A549 (cell line): ENCODE measurements at regions of chr19 and their contacts with region 1.

Region 1: DNA sequence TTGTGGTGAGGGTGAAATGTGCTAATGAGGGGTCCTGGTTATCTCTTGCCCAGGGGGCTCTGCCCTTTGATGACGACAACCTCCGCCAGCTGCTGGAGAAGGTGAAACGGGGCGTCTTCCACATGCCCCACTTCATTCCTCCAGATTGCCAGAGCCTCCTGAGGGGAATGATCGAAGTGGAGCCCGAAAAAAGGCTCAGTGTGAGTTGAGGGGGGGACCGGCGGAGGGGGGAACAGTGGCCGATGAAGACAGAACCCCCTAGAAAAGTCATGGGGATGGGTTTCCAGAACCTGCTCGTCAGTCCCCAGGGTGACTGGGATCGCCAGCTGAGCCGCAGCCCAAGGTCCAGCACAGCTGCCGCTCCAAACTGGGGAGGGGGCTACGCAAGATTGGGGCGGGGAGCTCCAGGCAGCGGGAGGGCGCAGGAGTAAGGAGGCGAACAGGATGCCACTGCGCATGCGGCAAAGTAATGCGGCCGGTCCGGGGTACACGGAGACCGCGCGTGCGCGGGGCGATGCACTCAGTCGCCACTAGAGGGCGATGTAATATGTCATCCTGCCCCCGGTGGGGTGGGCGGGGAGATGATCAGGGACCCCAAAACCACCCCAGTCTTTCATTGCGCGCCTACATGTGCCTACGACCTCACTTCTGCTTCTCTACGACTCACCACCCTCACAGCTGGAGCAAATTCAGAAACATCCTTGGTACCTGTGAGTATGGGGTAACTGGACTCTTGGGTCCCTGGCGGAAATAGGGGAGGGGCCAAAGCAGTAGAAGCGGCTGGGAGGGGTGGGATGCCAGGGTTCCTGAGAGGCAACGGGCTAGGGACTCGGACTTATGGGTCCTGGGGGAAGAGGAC is 17.9 kb downstream of the BRSK1 start:
- DNase-seq: peak; percentile 82 to 100
- ATAC-seq: peak; percentile 72 to 88
- H3K4me3 ChIP-seq: peak overlapping the region; percentile 54
- H3K27ac ChIP-seq: peak overlapping the region; percentile 87 to 88
- H3K4me1 ChIP-seq: peaks cover 6% of the 10 kb centered on the region; the same call in 2 of the 3 replicates
- CTCF ChIP-seq: peak; percentile 99
- EP300 ChIP-seq: no peak
- POLR2A ChIP-seq: peak; percentile 56
- RAD21 ChIP-seq: peak; percentile 83 to 92

Region 2: GRCh38 chr19:55088543-55089341 is 212.9 kb before region 1 on chr19:
- CTCF ChIA-PET with region 1: no interaction called
- POLR2A ChIA-PET with region 1: no interaction called
- DNase-seq: peak; percentile 71 to 81
- ATAC-seq: peak; percentile 52 to 79
- H3K4me3 ChIP-seq: no peak overlapping the region
- H3K27ac ChIP-seq: no peak overlapping the region
- H3K4me1 ChIP-seq: no peaks in the 10 kb centered on the region
- CTCF ChIP-seq: peak; percentile 93
- EP300 ChIP-seq: no peak
- POLR2A ChIP-seq: no peak
- RAD21 ChIP-seq: peak; percentile 33 to 51; a peak in 3 of 5 replicates

Region 3: DNA sequence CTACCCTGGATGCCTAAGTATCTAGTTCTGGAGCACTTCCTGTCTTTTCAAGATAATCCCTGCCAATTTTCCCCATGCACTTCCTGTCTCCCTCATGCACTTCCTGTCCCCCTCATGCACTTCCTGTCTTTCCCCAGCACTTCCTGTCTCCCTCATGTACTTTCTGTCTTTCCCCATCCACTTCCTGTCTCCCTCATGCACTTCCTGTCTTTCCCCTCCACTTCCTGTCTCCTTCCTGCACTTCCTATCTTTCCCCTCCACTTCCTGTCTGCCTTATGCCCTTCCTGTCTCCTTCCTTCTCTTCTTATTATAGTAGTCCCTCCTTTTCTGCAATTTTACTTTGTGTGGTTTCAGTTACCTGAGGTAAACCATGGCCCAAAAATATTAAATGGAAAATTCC is 149.7 kb before region 1 on chr19:
- CTCF ChIA-PET with region 1: no interaction called
- POLR2A ChIA-PET with region 1: no interaction called
- DNase-seq: peak in 1 of 2 experiments; percentile 55
- ATAC-seq: no peak
- H3K4me3 ChIP-seq: no peak overlapping the region
- H3K27ac ChIP-seq: peak overlapping the region in 1 of 2 experiments; percentile 56; a peak in 2 of 6 replicates
- H3K4me1 ChIP-seq: peaks cover 29% of the 10 kb centered on the region
- CTCF ChIP-seq: no peak
- EP300 ChIP-seq: no peak
- POLR2A ChIP-seq: no peak
- RAD21 ChIP-seq: no peak

Region 4: GRCh38 chr19:55258828-55259539 is 42.7 kb before region 1 on chr19 and contains the start of gene PPP6R1:
- CTCF ChIA-PET with region 1: interaction called, 12 read pairs
- POLR2A ChIA-PET with region 1: no interaction called
- DNase-seq: peak; percentile 99 to 100
- ATAC-seq: peak; percentile 83 to 93
- H3K4me3 ChIP-seq: peak within 1 kb of the TSS; percentile 81
- H3K27ac ChIP-seq: peak within 1 kb of the TSS; percentile 87 to 95
- H3K4me1 ChIP-seq: peaks cover 36% of the 10 kb centered on the region
- CTCF ChIP-seq: no peak
- EP300 ChIP-seq: peak in 1 of 2 experiments; percentile 31; a peak in 1 of 5 replicates
- POLR2A ChIP-seq: peak; percentile 87
- RAD21 ChIP-seq: peak; percentile 44 to 61; a peak in 4 of 5 replicates
- polyA plus RNA-seq, gene PPP6R1: 42.9 and 44.6 TPM in 2 replicates

Region 5: DNA sequence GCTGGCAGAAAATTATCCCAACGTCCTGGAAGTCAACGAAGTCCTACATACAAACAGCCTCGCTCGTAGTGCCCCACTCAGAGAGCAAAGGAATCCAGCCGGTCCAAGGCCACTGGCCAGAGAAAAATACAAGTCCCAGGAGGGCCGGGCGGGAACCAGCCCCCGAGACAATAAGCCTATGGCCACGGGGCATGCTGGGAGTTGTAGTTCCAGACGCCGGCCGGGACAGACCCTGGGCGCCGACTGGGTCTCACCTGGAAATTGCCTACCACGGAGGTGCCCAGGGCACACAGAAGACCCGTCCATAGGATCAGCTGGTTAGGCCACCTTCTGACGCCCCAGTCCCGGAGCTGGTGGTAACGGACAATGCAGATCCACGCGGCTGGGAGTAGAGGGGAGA is 18.1 kb after region 1 on chr19:
- CTCF ChIA-PET with region 1: interaction called, 306 read pairs
- POLR2A ChIA-PET with region 1: interaction called, 3 read pairs
- DNase-seq: no peak
- ATAC-seq: peak; percentile 54 to 82; a peak in 4 of 6 replicates
- H3K4me3 ChIP-seq: no peak overlapping the region
- H3K27ac ChIP-seq: 0 out of 6 replicates have a peak overlapping the region, but pooled peaks of 1 of the 2 experiments have one; percentile 14
- H3K4me1 ChIP-seq: peaks cover 19% of the 10 kb centered on the region
- CTCF ChIP-seq: no peak
- EP300 ChIP-seq: no peak
- POLR2A ChIP-seq: no peak
- RAD21 ChIP-seq: no peak

Region 6: GRCh38 chr19:55339048-55339888 is 37.6 kb after region 1 on chr19 and contains the start of gene KMT5C:
- CTCF ChIA-PET with region 1: interaction called, 84 read pairs
- POLR2A ChIA-PET with region 1: interaction called, 11 read pairs
- DNase-seq: peak; percentile 100
- ATAC-seq: peak; percentile 81 to 92
- H3K4me3 ChIP-seq: peak within 1 kb of the TSS; percentile 63
- H3K27ac ChIP-seq: peak within 1 kb of the TSS; percentile 90 to 93
- H3K4me1 ChIP-seq: peaks cover 17% of the 10 kb centered on the region
- CTCF ChIP-seq: no peak
- EP300 ChIP-seq: no peak
- POLR2A ChIP-seq: no peak
- RAD21 ChIP-seq: no peak; a peak in 1 of 5 replicates
- polyA plus RNA-seq, gene KMT5C: 6.6 and 9.5 TPM in 2 replicates

Region 7: DNA sequence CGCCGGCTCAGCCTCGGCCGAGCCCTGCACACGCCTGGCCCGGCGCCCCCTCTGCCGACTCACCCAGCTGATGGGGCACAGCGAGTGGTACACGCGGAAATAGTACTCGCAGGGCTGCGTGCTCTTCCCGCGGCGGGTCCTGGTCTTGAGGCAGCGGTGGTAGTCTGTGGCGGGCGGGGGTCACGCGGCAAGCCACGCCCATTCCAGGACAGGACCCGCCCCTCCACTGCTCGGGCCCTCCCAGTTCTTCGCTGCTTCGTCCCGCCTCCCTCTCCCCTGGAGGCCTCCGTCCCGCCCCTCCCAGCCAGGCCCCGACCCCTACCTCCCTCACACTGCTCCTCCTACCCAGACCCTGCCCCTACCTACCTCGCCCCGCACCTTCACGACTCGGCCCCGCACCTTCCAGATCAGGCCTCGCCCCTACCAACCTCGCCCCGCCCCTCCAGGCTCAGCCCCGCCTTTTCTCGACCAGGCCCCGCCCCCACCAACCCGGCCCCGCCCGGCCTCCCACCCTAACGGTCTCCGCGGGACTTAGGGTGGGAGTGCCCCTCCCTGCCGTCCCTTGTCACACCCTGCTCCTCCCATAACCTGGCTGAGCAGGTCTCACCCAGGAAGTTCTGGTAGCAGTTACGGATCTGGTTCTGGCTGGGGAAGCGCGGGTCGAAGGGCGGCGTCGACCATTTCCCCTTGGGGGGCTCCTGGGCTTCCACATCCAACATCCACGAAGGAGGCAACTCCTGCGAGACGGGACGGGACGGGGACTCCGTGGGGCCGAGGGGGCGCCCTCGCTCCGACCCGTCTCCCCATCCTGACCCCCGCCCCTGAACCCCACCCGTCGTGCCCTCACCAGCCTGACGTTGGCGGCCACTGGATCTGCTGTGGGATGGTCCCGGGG is 52.4 kb after region 1 on chr19:
- CTCF ChIA-PET with region 1: interaction called, 105 read pairs
- POLR2A ChIA-PET with region 1: no interaction called
- DNase-seq: peak; percentile 75 to 90
- ATAC-seq: peak; percentile 75 to 91
- H3K4me3 ChIP-seq: peak overlapping the region; percentile 50
- H3K27ac ChIP-seq: peak overlapping the region; percentile 62 to 84
- H3K4me1 ChIP-seq: peaks cover 12% of the 10 kb centered on the region
- CTCF ChIP-seq: no peak
- EP300 ChIP-seq: no peak
- POLR2A ChIP-seq: no peak
- RAD21 ChIP-seq: no peak

Region 8: DNA sequence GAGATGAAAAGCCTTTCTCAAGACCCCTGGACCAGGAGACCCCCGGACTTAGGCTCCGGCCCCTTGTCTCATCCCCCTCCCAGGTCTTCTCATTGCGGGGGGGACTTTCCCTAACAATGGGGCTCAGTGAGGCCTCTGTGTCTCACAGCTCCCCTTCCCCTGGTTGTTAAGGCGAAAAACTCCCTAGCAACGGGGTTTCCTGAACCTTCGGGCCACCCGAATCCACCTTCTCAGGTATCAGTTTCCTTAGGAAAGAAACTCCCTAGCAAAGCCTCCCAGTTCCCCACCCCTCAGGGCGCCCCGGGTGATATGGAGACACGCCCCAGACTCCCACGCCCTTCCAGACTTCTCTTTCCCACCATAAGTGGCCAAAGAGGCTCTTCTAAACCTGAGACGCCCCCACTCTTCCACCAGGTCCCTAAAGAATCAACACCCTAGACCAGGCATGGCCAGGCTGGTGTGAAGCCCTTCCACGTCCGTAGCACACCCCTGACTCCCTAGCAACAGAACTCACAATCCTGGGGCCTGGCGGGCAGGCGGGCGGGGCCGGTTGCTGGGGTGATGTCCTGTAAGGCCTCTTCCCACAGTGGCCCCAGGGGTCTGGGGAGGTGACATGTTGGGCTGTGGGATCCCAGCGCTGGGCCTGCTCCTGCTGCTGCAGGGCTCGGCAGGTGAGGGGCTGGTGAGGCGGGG is 74.7 kb after region 1 on chr19 and contains the start of gene TMEM190:
- CTCF ChIA-PET with region 1: interaction called, 20 read pairs
- POLR2A ChIA-PET with region 1: interaction called, 4 read pairs
- DNase-seq: peak in 1 of 2 experiments; percentile 68
- ATAC-seq: peak in 1 of 2 experiments; percentile 2; a peak in 2 of 6 replicates
- H3K4me3 ChIP-seq: no peak within 1 kb of the TSS
- H3K27ac ChIP-seq: peak within 1 kb of the TSS; percentile 91 to 96
- H3K4me1 ChIP-seq: peaks cover 86% of the 10 kb centered on the region
- CTCF ChIP-seq: no peak
- EP300 ChIP-seq: no peak
- POLR2A ChIP-seq: no peak
- RAD21 ChIP-seq: no peak
- polyA plus RNA-seq, gene TMEM190: 0.58 and 1.1 TPM in 2 replicates

Region 9: GRCh38 chr19:55398200-55398925 is 96.7 kb after region 1 on chr19:
- CTCF ChIA-PET with region 1: interaction called, 10 read pairs
- POLR2A ChIA-PET with region 1: no interaction called
- DNase-seq: no peak
- ATAC-seq: peak in 1 of 2 experiments; percentile 9; a peak in 3 of 6 replicates
- H3K4me3 ChIP-seq: no peak overlapping the region
- H3K27ac ChIP-seq: no peak overlapping the region
- H3K4me1 ChIP-seq: peaks cover 20% of the 10 kb centered on the region
- CTCF ChIP-seq: no peak
- EP300 ChIP-seq: no peak
- POLR2A ChIP-seq: no peak
- RAD21 ChIP-seq: no peak

Region 10: GRCh38 chr19:57118848-57119247 is 1817.2 kb after region 1 on chr19:
- CTCF ChIA-PET with region 1: no interaction called
- POLR2A ChIA-PET with region 1: no interaction called
- DNase-seq: no peak
- ATAC-seq: no peak
- H3K4me3 ChIP-seq: no peak overlapping the region
- H3K27ac ChIP-seq: no peak overlapping the region
- H3K4me1 ChIP-seq: no peaks in the 10 kb centered on the region
- CTCF ChIP-seq: no peak
- EP300 ChIP-seq: no peak
- POLR2A ChIP-seq: no peak
- RAD21 ChIP-seq: no peak